ENCODE measurements at regions of chr17 and their contacts with region 1.

Region 1: DNA sequence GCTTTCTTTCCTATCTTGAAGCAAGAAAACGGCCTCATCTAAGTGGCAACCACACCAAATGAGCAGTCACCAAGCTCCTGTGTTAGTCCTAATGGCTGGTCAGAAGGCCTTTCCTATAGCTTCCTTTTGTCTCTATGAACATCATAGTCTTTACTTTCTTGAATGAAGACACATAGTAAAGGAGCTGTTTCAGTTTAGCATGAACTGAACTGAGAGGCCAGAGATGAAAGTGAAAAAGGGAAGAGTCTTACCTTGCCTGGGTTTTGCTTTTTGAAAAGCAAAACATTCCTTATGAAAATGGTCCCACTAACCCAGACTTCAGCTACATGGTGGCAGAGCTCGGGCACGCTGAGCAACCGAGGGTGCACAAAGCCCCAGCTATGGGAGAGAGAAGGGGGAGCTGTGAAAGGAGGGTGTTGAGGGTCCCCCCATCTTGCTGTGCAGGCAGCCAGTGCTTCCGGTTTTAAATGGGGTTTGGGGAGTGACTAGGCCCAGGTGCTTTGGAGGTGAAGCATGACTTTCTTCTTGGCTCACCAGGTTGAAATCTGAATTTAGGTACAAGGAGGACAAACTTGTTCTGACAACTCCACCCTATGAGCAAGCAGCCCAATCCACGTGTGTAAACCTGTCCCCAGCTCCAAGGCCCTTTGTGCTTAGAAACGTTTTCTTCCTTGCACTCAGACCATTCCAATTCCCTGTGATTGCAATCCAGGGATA is 9.1 kb upstream of the PSMC3IP start:
- DNase-seq: no peak
- ATAC-seq: no peak
- H3K4me3 ChIP-seq: no peak overlapping the region
- H3K27ac ChIP-seq: no peak overlapping the region
- H3K4me1 ChIP-seq: no peaks in the 10 kb centered on the region
- H3K27me3 ChIP-seq: no peaks in the 10 kb centered on the region

Region 2: DNA sequence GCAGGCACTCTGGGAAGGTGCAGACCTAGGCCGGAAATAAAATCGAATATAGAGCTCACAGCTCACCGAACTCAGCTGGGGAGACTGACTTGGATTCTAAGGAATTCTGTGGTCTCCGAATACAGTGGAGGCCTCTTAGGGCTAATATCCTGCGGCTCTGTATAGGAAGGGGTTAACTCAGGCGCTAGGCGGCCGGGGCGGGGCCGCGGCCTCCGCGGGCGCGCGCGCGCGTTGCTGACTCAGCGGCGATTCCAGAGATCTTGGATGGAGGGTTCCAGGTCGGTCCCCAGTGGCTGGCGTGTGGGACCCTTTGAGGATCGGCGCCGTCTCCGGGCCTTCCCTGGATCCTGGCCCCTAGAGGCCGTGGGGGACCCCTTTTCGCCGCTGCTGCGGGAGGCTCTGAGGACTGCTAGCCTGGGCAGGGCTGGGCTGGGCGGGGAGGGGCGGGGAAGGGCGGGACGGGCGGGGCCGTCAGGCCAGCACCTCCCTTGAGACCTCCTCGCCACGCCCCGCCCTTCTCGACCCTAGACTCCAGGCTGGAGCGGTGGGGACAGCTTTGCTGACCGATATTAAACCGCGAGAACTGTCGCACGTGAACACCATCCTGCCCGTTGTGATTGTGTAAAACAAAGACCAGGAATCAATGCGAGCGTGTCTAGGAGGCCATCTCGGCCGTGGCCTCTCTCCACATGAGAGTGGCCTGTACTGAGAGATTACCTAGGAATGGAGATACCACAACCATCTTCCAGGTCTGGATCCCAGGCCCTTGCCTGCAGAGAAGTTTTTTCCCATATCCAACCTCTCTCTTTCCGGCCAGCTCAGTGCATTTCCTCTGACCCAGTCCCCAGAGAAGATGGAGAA is 91.5 kb after region 1 on chr17:
- intact Hi-C with region 1: loop called in 1 of 2 experiments (anchors 5 kb)
- DNase-seq: peak; percentile 92 to 95
- ATAC-seq: peak; percentile 69
- H3K4me3 ChIP-seq: peak overlapping the region; percentile 50 to 59
- H3K27ac ChIP-seq: peak overlapping the region in 1 of 2 donors; percentile 92
- H3K4me1 ChIP-seq: no peaks in the 10 kb centered on the region
- H3K27me3 ChIP-seq: no peaks in the 10 kb centered on the region

Region 3: DNA sequence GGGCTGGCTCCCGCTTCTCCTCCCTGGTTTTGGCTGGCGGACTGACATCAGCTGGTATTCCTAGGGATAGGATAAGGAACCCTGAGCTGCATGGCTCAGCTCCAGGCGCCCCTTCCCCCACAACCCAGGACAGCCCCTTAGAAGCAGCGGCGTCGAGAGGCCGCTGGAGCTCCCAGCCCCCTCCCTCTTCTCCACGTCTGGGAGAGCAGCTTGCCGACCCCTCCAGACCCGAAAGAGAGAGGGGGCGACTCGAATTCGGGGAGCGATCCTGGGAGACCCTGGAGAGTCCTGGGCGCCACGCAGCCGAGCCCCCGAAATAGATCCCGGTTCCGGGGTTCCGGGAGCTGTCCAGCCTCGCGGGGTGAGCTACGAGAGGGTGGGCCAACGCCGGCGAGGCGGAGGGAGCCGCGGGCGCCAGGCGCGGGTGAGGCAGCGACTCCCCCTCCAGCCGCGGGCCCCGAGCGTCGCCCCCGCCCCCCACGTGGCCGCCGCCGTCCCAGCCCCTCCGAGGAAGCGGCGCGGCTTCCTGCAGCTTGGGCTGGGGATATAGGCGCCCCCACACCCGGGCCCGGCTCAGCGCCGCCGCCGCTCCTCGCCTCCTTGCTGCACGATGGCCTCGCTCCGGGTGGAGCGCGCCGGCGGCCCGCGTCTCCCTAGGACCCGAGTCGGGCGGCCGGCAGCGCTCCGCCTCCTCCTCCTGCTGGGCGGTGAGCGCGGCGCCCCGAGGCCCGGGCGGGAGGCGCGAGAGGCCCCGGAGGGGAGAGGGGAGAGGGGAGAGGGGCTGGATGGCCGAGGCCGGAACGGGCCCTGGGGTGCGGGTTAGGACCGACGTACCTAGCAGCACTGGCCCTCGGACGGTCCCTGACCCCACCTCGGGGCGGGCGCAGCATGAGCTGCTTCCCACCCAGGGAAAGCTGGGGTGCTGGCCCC is 174.2 kb after region 1 on chr17 and contains the start of gene RAMP2:
- intact Hi-C with region 1: loop called in 1 of 2 experiments (anchors 10 kb)
- DNase-seq: peak; percentile 61 to 83
- ATAC-seq: peak; percentile 53
- H3K4me3 ChIP-seq: peak within 1 kb of the TSS; percentile 23 to 39
- H3K27ac ChIP-seq: no peak within 1 kb of the TSS
- H3K4me1 ChIP-seq: no peaks in the 10 kb centered on the region
- H3K27me3 ChIP-seq: no peaks in the 10 kb centered on the region
- total RNA-seq, gene RAMP2: 27.1 to 77.7 TPM